Activated CD8-positive, alpha-beta T cell treated with anti-CD3 and anti-CD28 coated beads for 36 hours (primary cell): ENCODE measurements at regions of chr3 and their contacts with region 1.

Region 1: DNA sequence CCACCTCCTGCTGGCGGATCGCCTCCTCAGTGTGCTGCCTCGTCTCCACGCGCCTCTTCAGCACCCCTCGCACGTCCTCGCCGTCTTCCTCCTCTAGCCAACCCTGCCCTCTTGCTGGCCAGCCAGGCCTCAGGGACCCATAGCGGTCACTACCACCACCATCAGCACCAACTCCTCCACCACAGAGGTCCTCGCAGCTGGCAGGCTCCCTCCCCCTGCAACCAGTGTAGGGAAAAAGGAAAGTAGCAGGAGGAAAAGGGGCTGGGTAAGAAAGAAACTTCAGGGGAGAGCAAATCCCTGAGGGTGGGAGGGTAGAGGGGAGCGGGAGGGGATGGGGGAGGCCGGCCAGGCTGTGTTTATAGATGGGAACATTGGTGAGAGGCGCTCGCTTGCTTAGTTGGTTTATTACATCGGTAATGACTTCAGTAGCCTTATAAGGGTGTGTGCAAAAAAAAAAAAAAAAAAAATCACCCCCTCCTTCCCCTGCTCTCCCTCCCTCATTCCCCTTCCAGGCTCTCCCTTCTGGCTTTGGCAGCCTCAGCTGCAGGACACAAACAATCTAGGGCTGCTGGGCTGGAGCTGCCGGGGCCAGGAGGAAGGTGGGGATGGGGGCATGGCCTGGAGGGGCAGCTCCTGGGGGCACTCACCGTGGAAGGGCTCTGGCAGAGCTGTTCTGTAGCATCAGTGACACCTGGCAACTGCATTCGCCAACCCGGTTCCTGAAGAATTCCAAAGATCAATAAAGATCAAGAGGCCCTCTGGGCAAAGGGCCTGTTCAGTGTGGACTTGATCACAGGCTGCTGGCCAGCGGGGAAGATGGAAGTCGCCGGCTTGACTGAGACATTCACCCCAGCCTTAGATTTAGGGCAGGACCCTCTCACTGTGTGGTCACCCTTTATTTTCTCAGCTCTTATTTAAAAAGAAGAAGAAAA is 116.2 kb upstream of the HACD2 start:
- DNase-seq: no peak
- ATAC-seq: no peak
- H3K4me3 Mint-ChIP-seq: no peak overlapping the region
- H3K27ac Mint-ChIP-seq: no peak overlapping the region
- H3K4me1 Mint-ChIP-seq: no peaks in the 10 kb centered on the region
- H3K27me3 Mint-ChIP-seq: no peaks in the 10 kb centered on the region
- CTCF ChIP-seq: no peak

Region 2: GRCh38 chr3:123652346-123652984 is 48.6 kb before region 1 on chr3:
- CTCF ChIA-PET with region 1: interaction called, 10 read pairs
- POLR2A ChIA-PET with region 1: no interaction called
- intact Hi-C with region 1: no loop called
- DNase-seq: peak; percentile 64
- ATAC-seq: peak; percentile 66
- H3K4me3 Mint-ChIP-seq: no peak overlapping the region
- H3K27ac Mint-ChIP-seq: no peak overlapping the region
- H3K4me1 Mint-ChIP-seq: no peaks in the 10 kb centered on the region
- H3K27me3 Mint-ChIP-seq: no peaks in the 10 kb centered on the region
- CTCF ChIP-seq: peak; percentile 69

Region 3: DNA sequence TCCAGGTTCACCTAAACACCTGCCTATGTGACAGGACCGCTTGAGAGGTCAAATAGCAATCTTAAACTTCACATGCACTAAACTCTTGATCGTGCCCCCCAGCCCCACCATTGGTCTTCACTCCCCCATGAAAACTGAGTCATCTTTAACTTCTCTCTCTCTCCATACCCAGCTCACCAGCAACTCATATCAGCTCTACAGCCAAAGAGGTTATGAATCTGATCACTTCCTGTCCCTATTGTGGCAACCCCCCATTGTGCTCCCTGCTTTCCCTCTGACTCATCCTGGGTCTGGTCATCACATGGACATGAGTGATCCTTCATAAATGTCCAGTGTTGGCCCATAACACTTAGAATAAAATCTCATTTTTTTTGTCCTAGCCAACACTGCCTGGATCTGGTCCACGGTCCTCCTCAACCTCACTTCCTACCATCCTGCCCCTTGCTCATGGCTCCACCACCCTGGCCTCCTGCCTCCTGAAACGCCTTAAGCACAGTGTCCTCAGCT is 12.8 kb before region 1 on chr3:
- CTCF ChIA-PET with region 1: no interaction called
- POLR2A ChIA-PET with region 1: no interaction called
- intact Hi-C with region 1: no loop called
- DNase-seq: no peak
- ATAC-seq: no peak
- H3K4me3 Mint-ChIP-seq: no peak overlapping the region
- H3K27ac Mint-ChIP-seq: no peak overlapping the region
- H3K4me1 Mint-ChIP-seq: no peaks in the 10 kb centered on the region
- H3K27me3 Mint-ChIP-seq: peaks cover 2% of the 10 kb centered on the region
- CTCF ChIP-seq: no peak